Mucosa of descending colon (tissue), 3 donors: ENCODE measurements at regions of chr2 and their contacts with region 1.

Region 1: DNA sequence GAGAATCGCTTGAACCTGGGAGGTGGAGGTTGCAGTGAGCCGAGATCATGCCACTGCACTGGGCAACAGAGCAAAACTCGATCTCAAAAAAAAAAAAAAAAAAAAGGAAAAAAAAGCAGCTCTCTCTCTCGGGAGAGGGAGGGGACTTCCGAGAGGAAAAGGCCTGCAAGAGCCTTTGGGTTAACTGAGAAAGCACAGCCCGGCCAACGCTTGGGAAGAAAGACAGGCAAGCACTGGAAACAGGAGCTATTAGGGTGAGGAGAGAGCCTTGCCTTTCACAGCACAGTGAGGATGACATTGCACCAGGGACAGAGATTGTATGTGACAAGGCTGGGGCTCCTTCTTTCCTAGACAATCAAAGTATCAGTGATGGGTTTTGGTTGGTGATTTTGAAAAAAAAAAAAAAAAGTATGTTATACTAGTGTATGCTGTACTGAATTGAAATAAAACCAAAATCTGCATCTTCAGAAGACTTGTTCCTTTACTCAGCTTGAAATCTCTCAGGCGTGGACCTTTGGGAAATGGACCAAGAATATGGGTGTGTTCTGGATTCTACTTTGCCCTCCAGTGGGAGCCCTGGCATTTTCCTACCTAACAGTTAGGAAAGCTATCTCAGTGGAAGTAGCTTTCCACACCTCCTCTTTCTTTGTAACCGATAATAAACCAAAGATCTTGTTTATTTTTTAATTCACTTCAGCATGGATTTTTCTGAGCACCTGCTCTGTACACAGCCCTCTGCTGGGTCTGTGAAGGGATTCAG is 16.7 kb downstream of the SRSF7 start:
- DNase-seq: no peak
- ATAC-seq: peak; percentile 38
- H3K4me3 ChIP-seq: no peak overlapping the region
- H3K4me1 ChIP-seq: peaks cover 11% of the 10 kb centered on the region
- CTCF ChIP-seq: no peak

Region 2: DNA sequence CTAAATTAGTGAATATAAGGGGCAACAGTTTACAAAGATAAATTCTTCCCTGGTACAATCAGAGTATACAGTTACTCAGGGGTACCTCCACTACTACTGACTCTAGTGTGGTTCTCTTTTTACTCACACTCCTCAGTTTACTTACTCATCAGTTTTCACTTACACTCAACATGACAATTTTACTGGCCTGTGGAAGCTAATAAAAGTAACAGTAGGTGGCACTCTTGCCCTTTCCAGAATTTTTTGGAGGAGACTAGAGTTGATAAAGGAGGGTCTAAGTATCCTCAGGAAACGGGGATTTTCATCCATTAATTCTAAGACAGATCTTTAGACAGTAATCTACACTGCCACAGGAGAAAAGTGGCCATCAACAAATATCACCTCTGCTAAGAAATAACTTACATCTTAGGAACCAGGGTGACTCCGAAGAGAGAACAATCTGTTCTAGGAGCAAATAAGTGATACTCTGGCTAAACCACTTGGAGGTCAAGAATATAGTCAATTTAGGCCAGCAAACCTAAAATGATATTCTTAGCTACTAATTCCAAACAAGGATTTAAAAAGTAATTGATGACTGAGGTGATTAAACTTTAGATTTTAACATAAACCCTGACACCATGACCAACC is 418.7 kb before region 1 on chr2:
- intact Hi-C with region 1: loop called in 1 of 2 experiments (anchors 10 kb)
- DNase-seq: peak in 1 of 3 donors; percentile 55
- ATAC-seq: peak; percentile 48
- H3K4me3 ChIP-seq: no peak overlapping the region
- H3K4me1 ChIP-seq: no peaks in the 10 kb centered on the region
- CTCF ChIP-seq: peak; percentile 43

Region 3: DNA sequence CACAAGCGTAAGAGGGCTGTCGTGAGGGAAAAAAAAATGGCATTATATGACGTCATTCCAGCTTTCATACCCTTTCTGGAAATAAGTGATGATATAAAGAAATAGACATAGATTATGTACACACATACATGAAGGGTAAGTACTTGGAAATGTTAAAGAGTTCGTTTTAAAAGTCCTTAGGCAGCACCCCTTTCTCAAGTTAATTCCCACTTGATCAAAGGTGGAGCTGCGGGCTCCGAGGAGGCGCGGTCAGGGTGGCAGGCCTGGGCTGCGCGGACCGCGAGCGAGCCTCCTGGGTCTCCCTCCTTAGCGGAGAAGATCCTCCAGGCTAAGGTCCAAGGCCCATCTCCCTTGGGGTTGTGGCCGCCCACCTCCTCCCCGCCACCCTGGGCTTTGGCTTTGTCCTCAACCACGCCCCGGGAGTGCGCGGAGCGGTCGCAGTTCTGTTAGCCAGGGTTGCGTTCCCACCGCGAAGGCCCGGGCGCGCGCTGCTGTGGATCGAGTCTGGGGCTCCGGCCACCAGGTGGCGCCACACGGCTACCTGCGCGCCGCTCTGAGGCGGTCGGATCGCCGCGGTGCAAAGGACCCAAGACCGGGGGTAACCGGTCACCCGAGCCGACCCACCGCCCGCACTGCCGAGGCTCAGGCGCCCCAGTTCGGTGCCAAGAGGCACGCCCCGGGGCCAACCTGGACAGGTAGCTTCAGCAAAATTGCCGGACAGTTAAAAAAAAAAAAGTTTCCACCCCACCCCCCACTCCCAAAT is 198.6 kb before region 1 on chr2:
- intact Hi-C with region 1: loop called in 1 of 2 experiments (anchors 10 kb)
- DNase-seq: peak; percentile 82 to 92 (median 90)
- ATAC-seq: peak; percentile 88
- H3K4me3 ChIP-seq: no peak overlapping the region
- H3K4me1 ChIP-seq: peaks cover 9% of the 10 kb centered on the region
- CTCF ChIP-seq: peak; percentile 94

Region 4: DNA sequence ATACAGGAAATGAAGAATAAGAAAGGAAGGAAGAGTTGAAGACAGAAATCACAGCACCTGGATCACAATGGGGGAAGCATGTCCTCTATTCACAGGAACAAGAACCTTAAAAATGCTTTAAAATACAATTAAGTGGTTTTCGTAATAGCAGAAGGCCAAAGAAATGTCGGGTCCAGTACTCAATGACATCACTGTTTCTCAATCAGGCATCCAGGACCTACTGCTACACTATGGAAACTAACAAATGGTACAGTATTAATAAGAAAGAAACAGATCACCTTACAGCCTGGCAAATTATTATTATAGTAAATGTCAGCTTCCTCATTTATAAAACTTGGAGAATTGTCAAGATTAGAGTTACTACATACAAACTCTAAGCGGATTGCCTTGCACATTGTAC is 147.5 kb before region 1 on chr2:
- intact Hi-C with region 1: loop called (anchors 5 to 10 kb)
- DNase-seq: no peak
- ATAC-seq: no peak
- H3K4me3 ChIP-seq: no peak overlapping the region
- H3K4me1 ChIP-seq: no peaks in the 10 kb centered on the region
- CTCF ChIP-seq: no peak